ENCODE measurements at regions of chr14 and their contacts with region 1.

Region 1: GRCh38 chr14:23160924-23161538 is 22.4 kb downstream of the SLC7A8 start:
- DNase-seq: peak in 1 of 2 experiments; percentile 83
- H3K4me3 ChIP-seq: peak overlapping the region in 1 of 4 experiments; percentile 47; a peak in 2 of 8 replicates
- H3K27ac ChIP-seq: peak overlapping the region; percentile 79; the same call in 1 of the 2 replicates
- H3K4me1 ChIP-seq: peaks cover 9 to 31% (median 17%) of the 10 kb centered on the region in 4 experiments
- H3K27me3 ChIP-seq: no peaks in the 10 kb centered on the region
- CTCF ChIP-seq: no peak
- EP300 ChIP-seq: no peak
- POLR2A ChIP-seq: peak; percentile 43 to 54
- RAD21 ChIP-seq: no peak; a peak in 2 of 4 replicates

Region 2: GRCh38 chr14:23174276-23175184 is 13.5 kb after region 1 on chr14:
- CTCF ChIA-PET with region 1: interaction called, 46 read pairs
- POLR2A ChIA-PET with region 1: interaction called, 16 read pairs
- DNase-seq: no peak
- H3K4me3 ChIP-seq: no peak overlapping the region; a peak in 1 of 8 replicates
- H3K27ac ChIP-seq: no peak overlapping the region
- H3K4me1 ChIP-seq: peaks cover 2 to 18% (median 13%) of the 10 kb centered on the region in 4 experiments; a peak in 5 of 7 replicates
- H3K27me3 ChIP-seq: no peaks in the 10 kb centered on the region
- CTCF ChIP-seq: no peak
- EP300 ChIP-seq: no peak
- POLR2A ChIP-seq: no peak
- RAD21 ChIP-seq: no peak

Region 3: GRCh38 chr14:23181453-23181852 is 20.4 kb after region 1 on chr14:
- CTCF ChIA-PET with region 1: interaction called, 46 read pairs
- POLR2A ChIA-PET with region 1: interaction called, 16 read pairs
- DNase-seq: peak in 1 of 2 experiments; percentile 38
- H3K4me3 ChIP-seq: peak overlapping the region; percentile 52 to 83 (median 62)
- H3K27ac ChIP-seq: no peak overlapping the region
- H3K4me1 ChIP-seq: peaks cover 0 to 2% (median 0%) of the 10 kb centered on the region in 4 experiments; a peak in 5 of 7 replicates
- H3K27me3 ChIP-seq: no peaks in the 10 kb centered on the region
- CTCF ChIP-seq: no peak
- EP300 ChIP-seq: no peak
- POLR2A ChIP-seq: no peak
- RAD21 ChIP-seq: no peak

Region 4: GRCh38 chr14:23494223-23494622 is 333.2 kb after region 1 on chr14:
- CTCF ChIA-PET with region 1: no interaction called
- POLR2A ChIA-PET with region 1: no interaction called
- DNase-seq: peak in 1 of 2 experiments; percentile 58
- H3K4me3 ChIP-seq: peak overlapping the region in 2 of 4 experiments; percentile 2 to 30; a peak in 3 of 8 replicates
- H3K27ac ChIP-seq: no peak overlapping the region; the same call in 1 of the 2 replicates
- H3K4me1 ChIP-seq: peaks cover 7 to 12% (median 8%) of the 10 kb centered on the region in 4 experiments
- H3K27me3 ChIP-seq: no peaks in the 10 kb centered on the region
- CTCF ChIP-seq: no peak
- EP300 ChIP-seq: no peak
- POLR2A ChIP-seq: 0 out of 3 replicates have a peak, but pooled peaks of 1 of the 2 experiments have one; percentile 39
- RAD21 ChIP-seq: no peak

Measured in H1 (cell line).